Mucosa of descending colon (tissue), 3 donors: ENCODE measurements at regions of chr10 and their contacts with region 1.

Region 1: GRCh38 chr10:6014241-6014761 is 37.0 kb upstream of the IL15RA start:
- DNase-seq: peak in 1 of 3 donors; percentile 93
- ATAC-seq: peak; percentile 62
- H3K4me3 ChIP-seq: no peak overlapping the region
- H3K4me1 ChIP-seq: peaks cover 15% of the 10 kb centered on the region
- CTCF ChIP-seq: peak; percentile 69

Region 2: DNA sequence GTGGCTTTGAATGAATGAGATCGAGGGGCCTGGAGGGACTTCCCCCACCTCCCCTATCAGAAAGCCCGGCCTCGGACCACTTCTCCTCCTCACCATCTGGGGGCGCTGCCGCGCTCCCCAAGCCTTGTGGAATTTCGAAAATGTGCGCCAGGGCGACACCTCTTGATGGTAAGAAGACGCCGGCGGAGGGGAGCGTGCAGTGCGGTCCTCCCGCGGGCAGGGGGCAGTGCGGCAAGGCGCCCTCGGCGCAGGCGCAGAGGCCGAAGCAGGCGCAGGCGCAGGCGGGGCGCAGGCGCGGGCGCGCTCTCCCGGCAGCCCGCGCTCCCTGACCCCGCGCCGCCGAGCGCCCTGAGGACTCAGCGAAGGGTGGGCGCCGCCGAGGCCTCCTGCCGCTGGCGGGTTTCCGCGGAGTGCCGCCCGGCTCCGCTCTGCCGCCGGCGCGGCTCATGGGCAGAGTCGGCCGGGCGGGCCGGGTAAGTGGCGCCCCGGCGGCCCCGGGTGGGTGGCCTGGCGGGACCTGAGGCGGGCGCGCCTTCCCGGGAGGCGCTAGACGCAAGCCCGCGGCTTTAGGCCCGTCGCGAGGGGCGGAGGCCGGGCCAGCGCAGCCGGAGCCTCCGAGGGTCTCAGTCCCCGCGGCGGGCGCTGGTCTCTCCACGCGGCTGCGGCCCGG is 74.6 kb after region 1 on chr10 and contains the start of gene RBM17:
- intact Hi-C with region 1: loop called in 1 of 2 experiments (anchors 10 kb)
- DNase-seq: peak; percentile 97 to 98 (median 97)
- ATAC-seq: peak; percentile 97
- H3K4me3 ChIP-seq: peak within 1 kb of the TSS; percentile 97
- H3K4me1 ChIP-seq: peaks cover 25% of the 10 kb centered on the region
- CTCF ChIP-seq: peak; percentile 100
- total RNA-seq, gene RBM17: 87.4 to 100 (median 90.8) TPM